AG04450 (cell line): ENCODE measurements at regions of chr1 and their contacts with region 1.

Region 1: GRCh38 chr1:21334214-21335087 is 44.2 kb upstream of the ECE1 start:
- DNase-seq: no peak
- H3K4me3 ChIP-seq: peak overlapping the region; percentile 56
- H3K27ac ChIP-seq: peak overlapping the region; percentile 79
- H3K27me3 ChIP-seq: no peaks in the 10 kb centered on the region
- CTCF ChIP-seq: peak; percentile 93

Region 2: DNA sequence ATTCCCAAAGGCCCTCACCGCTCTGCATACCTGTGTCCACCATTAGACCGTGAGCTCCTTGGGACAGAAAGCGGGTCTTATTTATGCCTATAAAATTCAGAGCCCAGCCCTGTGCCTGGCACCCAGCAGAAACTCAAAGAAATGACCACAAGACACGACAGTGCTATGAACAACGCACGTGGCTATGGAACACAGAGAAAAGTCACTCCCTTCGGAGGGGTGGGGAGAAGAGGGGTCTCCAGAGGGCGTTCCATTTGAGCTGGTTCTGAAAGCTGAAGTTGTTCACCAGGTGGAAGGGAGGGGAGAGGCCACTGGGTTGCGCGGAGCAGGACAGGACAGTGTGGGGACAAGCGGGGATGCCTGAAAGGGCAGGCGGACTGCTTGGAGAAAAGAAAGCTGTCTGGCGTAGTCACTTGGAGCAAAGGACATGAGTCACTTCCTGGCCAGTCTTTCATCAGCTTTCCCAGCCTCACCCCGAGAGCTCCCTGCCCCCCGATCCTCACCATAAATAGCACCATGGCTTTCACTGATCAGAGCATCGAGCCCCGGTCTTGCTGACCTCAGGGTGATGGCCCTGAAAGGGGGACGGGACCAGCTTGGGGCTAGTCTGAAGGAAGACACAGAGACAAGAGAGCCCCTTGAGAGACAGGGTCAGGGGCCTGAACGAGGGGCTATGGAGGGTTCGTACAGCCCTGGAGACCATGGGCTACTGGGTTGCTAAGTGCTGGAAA is 72.7 kb before region 1 on chr1:
- CTCF ChIA-PET with region 1: interaction called, 5 read pairs
- POLR2A ChIA-PET with region 1: interaction called, 10 read pairs
- DNase-seq: peak; percentile 77
- H3K4me3 ChIP-seq: no peak overlapping the region; the same call in 1 of the 2 replicates
- H3K27ac ChIP-seq: peak overlapping the region; percentile 97
- H3K27me3 ChIP-seq: no peaks in the 10 kb centered on the region
- CTCF ChIP-seq: no peak

Region 3: DNA sequence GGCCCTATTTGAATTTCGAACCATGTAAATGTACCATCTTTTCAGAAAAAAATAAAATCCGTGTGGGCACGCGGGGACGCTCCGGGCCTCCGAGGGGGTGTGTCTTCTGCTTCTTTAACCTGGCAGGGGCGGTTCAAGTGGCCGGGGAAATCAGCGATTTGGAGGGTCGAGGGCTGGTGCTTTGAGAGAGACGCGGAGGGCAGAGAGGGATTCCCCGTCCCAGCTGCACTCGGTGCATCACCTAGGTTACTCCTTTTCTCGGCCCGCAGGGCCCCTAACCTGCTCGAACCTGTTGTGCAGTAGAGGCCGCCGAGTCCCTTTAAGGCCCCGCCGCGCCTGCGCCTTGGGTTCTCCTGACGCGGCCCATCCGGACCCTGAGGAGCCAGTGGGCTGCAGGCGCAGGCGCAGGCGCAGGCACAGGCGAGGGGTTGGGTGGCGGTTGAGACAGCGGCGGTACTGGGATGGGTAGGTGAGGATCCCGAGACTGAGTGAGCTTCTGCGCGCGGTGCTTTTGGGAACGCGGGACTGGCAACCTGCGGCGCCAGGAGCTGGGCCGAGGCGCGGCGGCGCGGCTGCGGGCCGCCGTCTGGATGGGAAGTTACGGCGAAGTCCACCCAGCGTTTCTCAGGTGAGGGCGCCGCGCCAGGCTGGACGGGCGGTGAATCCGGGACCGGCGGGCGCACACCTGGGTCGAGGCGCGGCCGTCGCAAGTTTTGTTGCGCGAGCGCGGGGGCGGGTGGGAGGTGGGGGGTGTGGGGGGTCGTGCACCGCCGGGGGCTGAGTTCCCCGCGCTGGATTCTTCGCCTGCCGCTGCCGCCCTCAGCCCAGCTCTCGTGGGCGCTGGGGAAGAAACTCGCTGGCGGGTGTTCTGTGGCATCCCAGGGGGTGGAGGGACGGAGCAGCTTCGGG is 105.5 kb after region 1 on chr1 and contains the start of gene NBPF3:
- CTCF ChIA-PET with region 1: no interaction called
- POLR2A ChIA-PET with region 1: no interaction called
- DNase-seq: peak; percentile 46
- H3K4me3 ChIP-seq: peak within 1 kb of the TSS; percentile 74
- H3K27ac ChIP-seq: no peak within 1 kb of the TSS
- H3K27me3 ChIP-seq: no peaks in the 10 kb centered on the region
- CTCF ChIP-seq: no peak
- polyA plus RNA-seq, gene NBPF3: 23.8 and 24.3 TPM in 2 replicates